ENCODE measurements at regions of chr6 and their contacts with region 1.

Region 1: DNA sequence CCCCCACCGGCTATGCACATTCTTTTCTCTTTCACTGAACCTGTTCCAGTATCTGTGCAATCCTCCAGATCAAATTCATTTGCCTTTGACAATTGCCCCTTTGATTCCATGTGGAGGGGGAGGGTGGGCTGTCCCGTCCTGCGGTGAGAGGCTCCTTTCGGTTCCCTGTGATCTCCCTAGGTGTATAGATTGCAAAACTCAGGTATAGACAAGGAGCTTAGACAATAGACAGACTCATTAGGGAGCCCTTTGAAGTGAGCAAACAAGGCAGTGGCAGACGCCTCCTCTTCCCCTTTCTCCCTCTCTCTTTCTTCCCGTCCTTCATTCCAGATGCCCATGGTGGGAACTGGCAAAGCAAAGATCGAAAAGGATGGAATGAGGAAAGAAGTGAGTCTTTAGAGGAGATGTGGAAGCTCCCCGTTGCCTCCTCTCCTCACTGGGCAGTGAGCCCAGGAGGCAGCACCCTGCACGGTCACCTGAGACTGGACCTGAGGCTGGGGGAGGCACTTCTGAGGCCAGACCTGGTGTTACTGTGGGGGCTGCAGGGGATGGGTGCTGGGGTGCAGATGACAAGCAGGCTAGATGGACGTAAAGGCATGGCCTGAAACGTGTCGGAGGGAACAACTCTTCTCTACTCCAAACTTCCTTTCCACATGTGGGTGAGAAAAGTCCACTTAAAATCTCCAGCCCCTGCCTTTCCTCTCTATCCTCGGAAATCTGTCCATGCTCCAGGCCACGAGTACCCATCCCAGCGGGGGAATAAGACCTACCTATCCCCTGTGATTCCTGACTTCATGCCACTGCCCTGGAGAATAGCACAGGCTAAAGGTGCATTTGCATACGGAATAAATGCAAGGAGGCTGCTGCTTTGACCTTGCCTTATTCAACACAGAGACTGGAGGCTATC is 256.6 kb upstream of the FOXQ1 start:
- DNase-seq: peak; percentile 100
- ATAC-seq: peak; percentile 80
- H3K4me3 ChIP-seq: peak overlapping the region; percentile 33 to 70 (median 42)
- H3K27ac ChIP-seq: peak overlapping the region; percentile 92
- H3K4me1 ChIP-seq: peaks cover 55% of the 10 kb centered on the region
- H3K27me3 ChIP-seq: no peaks in the 10 kb centered on the region
- CTCF ChIP-seq: no peak
- EP300 ChIP-seq: peak; percentile 99 to 100
- POLR2A ChIP-seq: peak; percentile 59 to 71
- RAD21 ChIP-seq: peak; percentile 27; the same call in 1 of the 2 replicates

Region 2: DNA sequence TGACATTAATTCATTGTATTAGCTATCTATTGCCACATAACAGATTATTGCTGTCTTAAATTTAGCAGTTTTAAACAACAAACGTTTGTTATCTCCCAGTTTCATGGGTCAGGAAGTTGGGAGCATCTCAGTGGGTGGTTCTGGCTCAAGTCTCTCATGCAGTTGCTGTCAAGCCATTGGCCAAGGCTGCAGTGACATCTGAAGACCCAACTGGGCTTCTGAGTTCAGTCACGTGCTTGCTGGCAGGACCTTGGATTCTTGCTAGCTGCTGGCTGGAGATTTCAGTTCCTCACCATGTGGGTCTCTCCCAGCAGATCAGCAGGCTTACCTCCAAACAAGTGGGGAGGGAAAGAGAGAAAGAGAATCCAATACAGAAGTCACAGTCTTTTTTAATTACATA is 209.7 kb before region 1 on chr6:
- CTCF ChIA-PET with region 1: no interaction called
- POLR2A ChIA-PET with region 1: no interaction called
- in situ Hi-C with region 1: no loop called
- intact Hi-C with region 1: no loop called
- DNase-seq: no peak
- ATAC-seq: no peak
- H3K4me3 ChIP-seq: no peak overlapping the region
- H3K27ac ChIP-seq: no peak overlapping the region
- H3K4me1 ChIP-seq: no peaks in the 10 kb centered on the region
- H3K27me3 ChIP-seq: peaks cover 0 to 8% of the 10 kb centered on the region in 2 experiments; a peak in 3 of 5 replicates
- CTCF ChIP-seq: no peak
- EP300 ChIP-seq: no peak
- POLR2A ChIP-seq: no peak
- RAD21 ChIP-seq: no peak

Region 3: DNA sequence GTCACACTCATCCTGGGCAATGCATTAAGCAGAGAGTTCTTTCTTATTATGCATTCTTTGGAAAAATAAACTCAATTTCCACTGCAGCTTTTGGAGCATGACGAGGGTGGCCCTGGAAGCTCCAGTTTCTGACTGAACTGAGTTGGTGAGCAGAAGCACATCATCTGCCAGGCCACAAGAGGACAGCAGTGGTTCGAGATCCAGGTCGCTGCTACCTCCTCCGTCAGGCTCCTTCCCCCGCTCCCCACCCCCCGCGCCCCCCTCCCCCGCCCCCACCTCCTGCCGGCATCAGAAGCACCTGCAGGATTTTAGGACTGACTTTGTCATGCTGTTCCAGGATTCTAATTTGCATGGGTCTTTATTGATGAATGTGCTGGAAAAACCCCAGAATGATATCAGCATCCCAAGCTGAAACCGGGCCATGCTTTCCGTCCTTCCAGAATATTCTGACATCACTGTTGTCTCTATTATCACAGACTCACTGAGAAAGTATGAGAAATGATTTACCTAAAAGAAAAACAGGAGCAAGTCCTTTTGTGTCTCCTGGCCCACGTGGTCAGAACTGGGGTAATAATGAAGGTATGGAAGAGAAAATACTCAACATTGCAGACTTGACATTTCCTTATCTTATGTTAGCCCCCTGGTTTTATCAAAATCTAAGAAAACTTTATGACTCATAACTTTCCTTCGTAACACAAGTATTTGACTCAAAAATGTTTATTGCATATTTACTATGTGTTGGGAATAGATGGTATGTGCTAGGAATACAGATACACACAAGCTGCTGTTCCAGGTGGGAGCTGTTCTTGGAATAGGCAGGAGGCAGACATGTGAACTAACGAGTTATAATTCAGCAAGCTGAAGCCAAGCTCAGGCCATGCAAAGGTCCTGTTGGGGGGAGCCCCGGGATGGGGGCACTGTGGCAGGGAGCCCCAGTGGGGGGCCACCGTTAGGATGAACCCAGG is 142.1 kb before region 1 on chr6:
- CTCF ChIA-PET with region 1: no interaction called
- POLR2A ChIA-PET with region 1: interaction called, 5 read pairs
- in situ Hi-C with region 1: no loop called
- intact Hi-C with region 1: loop called (anchors 5 kb)
- DNase-seq: peak; percentile 56
- ATAC-seq: peak; percentile 91
- H3K4me3 ChIP-seq: no peak overlapping the region
- H3K27ac ChIP-seq: no peak overlapping the region
- H3K4me1 ChIP-seq: peaks cover 16% of the 10 kb centered on the region
- H3K27me3 ChIP-seq: peaks cover 2 to 15% of the 10 kb centered on the region in 2 experiments; a peak in 1 of 5 replicates
- CTCF ChIP-seq: peak; percentile 84
- EP300 ChIP-seq: no peak
- POLR2A ChIP-seq: no peak
- RAD21 ChIP-seq: peak; percentile 85

Region 4: DNA sequence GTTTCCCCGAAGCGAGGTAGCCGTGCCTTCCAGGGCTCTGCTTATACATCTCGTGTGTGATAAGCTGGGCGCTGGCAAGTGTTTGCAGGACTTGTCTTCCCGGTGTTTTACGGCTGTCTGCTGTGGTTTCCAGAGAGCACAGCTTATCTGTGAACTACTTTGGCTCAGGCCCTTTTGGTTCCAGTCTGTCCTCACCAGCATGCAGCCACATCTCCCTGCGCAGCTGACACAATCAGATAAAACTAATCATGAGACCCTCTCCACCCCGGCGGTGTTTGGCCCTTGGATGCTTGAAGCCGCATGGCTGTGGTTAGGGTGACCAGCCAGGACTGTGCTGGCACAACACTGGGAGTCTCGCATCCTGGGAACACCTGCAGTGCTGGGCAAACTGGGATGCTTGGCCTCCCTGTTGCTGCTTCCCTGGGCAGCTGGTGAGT is 14.8 kb after region 1 on chr6:
- CTCF ChIA-PET with region 1: no interaction called
- POLR2A ChIA-PET with region 1: interaction called, 23 read pairs
- in situ Hi-C with region 1: no loop called
- intact Hi-C with region 1: loop called (anchors 2 kb)
- DNase-seq: no peak
- ATAC-seq: no peak
- H3K4me3 ChIP-seq: no peak overlapping the region
- H3K27ac ChIP-seq: no peak overlapping the region
- H3K4me1 ChIP-seq: peaks cover 58% of the 10 kb centered on the region
- H3K27me3 ChIP-seq: no peaks in the 10 kb centered on the region
- CTCF ChIP-seq: no peak
- EP300 ChIP-seq: no peak
- POLR2A ChIP-seq: no peak
- RAD21 ChIP-seq: no peak

Region 5: GRCh38 chr6:1179571-1180459 is 124.5 kb after region 1 on chr6:
- CTCF ChIA-PET with region 1: no interaction called
- POLR2A ChIA-PET with region 1: interaction called, 19 read pairs
- in situ Hi-C with region 1: no loop called
- intact Hi-C with region 1: no loop called
- DNase-seq: no peak
- ATAC-seq: no peak
- H3K4me3 ChIP-seq: no peak overlapping the region
- H3K27ac ChIP-seq: no peak overlapping the region
- H3K4me1 ChIP-seq: peaks cover 56% of the 10 kb centered on the region
- H3K27me3 ChIP-seq: no peaks in the 10 kb centered on the region
- CTCF ChIP-seq: no peak
- EP300 ChIP-seq: no peak
- POLR2A ChIP-seq: no peak
- RAD21 ChIP-seq: no peak

Region 6: DNA sequence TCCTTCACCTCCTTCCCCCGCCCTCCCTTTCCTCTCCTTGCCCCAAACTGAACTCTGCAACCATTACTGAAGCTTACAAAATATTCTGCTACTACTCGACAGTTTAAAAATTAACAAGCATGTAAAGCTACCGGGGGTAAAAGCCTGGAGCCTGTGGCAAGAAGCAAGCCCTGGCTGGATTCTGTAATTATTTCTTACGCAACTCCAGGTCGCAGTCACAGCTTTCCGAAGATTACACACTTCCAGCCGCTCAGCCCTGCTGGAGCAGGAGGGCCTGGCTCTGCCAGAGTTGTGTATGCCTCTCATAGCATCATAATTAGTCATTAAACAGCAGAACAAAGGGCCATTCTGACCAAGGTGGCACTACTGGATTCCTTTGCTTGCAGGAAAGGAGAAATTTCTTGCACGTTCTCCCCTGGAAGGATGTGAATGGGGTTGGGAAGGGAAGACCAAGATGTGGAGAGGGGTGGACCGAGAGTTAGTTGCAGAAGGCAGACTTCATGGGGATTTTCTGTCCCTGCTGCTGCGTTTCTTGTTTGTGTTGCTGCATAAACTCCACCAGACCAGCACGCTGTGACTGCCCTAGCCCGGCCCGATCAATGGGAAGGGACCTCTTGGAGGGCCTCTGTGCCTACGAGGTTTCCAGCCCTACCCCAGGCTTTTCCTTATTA is 280.2 kb after region 1 on chr6:
- CTCF ChIA-PET with region 1: interaction called, 3 read pairs
- POLR2A ChIA-PET with region 1: interaction called, 37 read pairs
- in situ Hi-C with region 1: no loop called
- intact Hi-C with region 1: no loop called
- DNase-seq: peak; percentile 98
- ATAC-seq: peak; percentile 93
- H3K4me3 ChIP-seq: peak overlapping the region; percentile 20 to 65 (median 31)
- H3K27ac ChIP-seq: peak overlapping the region; percentile 73
- H3K4me1 ChIP-seq: peaks cover 48% of the 10 kb centered on the region
- H3K27me3 ChIP-seq: peaks cover 0 to 10% of the 10 kb centered on the region in 2 experiments; a peak in 1 of 5 replicates
- CTCF ChIP-seq: peak; percentile 41
- EP300 ChIP-seq: peak; percentile 89 to 93
- POLR2A ChIP-seq: peak in 1 of 2 experiments; percentile 52; a peak in 3 of 4 replicates
- RAD21 ChIP-seq: peak; percentile 52; the same call in 1 of the 2 replicates